ENCODE measurements at regions of chr7 and their contacts with region 1.

Region 1: DNA sequence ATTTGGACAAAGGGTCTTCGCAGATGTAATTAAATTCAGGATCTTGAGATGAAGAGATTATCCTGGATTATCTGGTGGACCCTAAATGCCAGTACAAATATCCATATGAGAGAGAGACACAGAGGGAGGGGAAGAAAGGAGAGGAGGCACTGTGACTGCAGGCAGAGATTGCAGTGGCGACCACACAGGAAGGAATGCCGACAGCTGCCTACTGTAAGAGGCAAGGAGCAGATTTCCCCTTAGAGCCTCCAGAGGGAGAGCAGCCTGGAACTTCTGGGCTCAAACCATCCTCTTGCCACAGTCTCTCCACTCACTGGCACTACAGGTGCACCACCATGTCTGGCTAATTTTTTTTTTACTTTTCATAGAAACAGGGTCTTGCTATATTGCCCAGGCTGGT is 152.3 kb downstream of the SDK1 start:
- DNase-seq: no peak
- ATAC-seq: no peak
- H3K4me3 ChIP-seq: no peak overlapping the region
- H3K4me3 Mint-ChIP-seq: no peak overlapping the region
- H3K27ac ChIP-seq: no peak overlapping the region
- H3K27ac Mint-ChIP-seq: no peak overlapping the region
- H3K4me1 ChIP-seq: no peaks in the 10 kb centered on the region
- H3K4me1 Mint-ChIP-seq: no peaks in the 10 kb centered on the region
- H3K27me3 ChIP-seq: peaks cover 0 to 2% of the 10 kb centered on the region in 2 experiments
- H3K27me3 Mint-ChIP-seq: no peaks in the 10 kb centered on the region
- CTCF ChIP-seq: no peak

Region 2: GRCh38 chr7:3493499-3493898 is 40.1 kb after region 1 on chr7:
- CTCF ChIA-PET with region 1: no interaction called
- POLR2A ChIA-PET with region 1: no interaction called
- intact Hi-C with region 1: loop called in 1 of 2 experiments (anchors 5 kb)
- DNase-seq: no peak
- ATAC-seq: no peak
- H3K4me3 ChIP-seq: no peak overlapping the region
- H3K4me3 Mint-ChIP-seq: no peak overlapping the region
- H3K27ac ChIP-seq: no peak overlapping the region
- H3K27ac Mint-ChIP-seq: no peak overlapping the region
- H3K4me1 ChIP-seq: no peaks in the 10 kb centered on the region
- H3K4me1 Mint-ChIP-seq: peaks cover 8% of the 10 kb centered on the region
- H3K27me3 ChIP-seq: no peaks in the 10 kb centered on the region
- H3K27me3 Mint-ChIP-seq: peaks cover 4% of the 10 kb centered on the region
- CTCF ChIP-seq: no peak

Measured in CD8-positive, alpha-beta T cell (primary cell).